IMR-90 (cell line): ENCODE measurements at regions of chr2 and their contacts with region 1.

Region 1: GRCh38 chr2:233371641-233372040 is 17.3 kb downstream of the DGKD start:
- DNase-seq: no peak
- ATAC-seq: no peak
- H3K4me3 ChIP-seq: no peak overlapping the region
- H3K27ac ChIP-seq: no peak overlapping the region
- H3K4me1 ChIP-seq: no peaks in the 10 kb centered on the region; the same call in 1 of the 2 replicates
- H3K27me3 ChIP-seq: no peaks in the 10 kb centered on the region
- CTCF ChIP-seq: no peak
- POLR2A ChIP-seq: no peak
- RAD21 ChIP-seq: no peak

Region 2: DNA sequence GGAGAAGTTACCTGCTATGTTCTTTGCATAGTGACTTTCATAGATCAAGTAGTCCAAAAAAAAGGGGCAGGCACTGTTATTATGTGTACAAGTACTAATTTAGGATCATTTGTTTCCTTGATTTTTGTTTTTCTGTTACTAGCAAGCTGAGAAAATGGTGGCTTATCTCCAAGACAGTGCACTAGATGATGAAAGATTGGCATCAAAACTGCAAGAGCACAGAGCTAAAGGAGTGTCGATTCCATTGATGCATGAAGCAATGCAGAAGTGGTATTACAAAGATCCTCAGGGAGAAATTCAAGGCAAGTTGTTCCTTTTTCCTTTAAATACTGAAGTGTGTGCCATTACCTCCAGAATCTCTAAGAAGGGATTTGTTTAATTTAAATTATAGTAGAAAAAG is 575.7 kb before region 1 on chr2:
- CTCF ChIA-PET with region 1: no interaction called
- POLR2A ChIA-PET with region 1: no interaction called
- dilution Hi-C with region 1: no loop called
- in situ Hi-C with region 1: no loop called
- intact Hi-C with region 1: no loop called
- DNase-seq: peak; percentile 15
- ATAC-seq: no peak
- H3K4me3 ChIP-seq: no peak overlapping the region
- H3K27ac ChIP-seq: no peak overlapping the region
- H3K4me1 ChIP-seq: no peaks in the 10 kb centered on the region
- H3K27me3 ChIP-seq: no peaks in the 10 kb centered on the region
- CTCF ChIP-seq: no peak
- POLR2A ChIP-seq: no peak
- RAD21 ChIP-seq: no peak

Region 3: DNA sequence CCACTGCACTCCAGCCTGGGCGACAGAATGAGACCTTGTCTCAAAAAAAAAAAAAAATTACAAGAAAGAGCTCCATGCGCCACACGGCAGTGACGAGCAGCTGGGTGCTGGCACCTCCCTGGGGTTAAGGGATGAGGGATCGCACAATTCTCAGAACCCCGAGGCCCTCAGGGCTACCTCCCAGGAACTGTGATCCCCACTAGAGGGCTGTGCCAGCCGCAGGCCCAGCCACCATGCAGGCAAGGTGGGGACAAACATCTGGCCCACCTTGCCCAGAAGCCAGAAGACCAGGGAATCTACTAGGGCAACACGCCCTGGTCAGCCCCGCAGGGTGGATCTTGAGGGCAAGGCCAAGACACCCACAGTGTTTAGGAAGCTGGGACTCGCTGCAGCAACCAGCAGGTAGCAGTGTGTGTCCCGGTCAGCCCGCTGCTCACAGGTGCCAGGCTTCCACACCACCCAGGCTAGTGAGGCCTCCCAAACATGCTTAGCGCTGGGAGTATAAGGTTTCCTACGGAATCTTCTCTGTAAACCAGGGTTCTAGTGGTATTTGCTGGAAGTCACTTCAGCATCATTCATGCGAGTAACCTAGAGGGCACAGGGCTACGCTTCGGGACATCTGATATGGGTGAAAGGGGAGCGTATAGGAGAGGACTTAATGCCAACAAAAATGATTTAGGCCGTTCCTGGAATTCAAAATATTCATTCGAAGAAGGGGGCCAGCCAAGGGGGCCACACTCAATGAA is 57.3 kb before region 1 on chr2:
- CTCF ChIA-PET with region 1: no interaction called
- POLR2A ChIA-PET with region 1: no interaction called
- dilution Hi-C with region 1: no loop called
- in situ Hi-C with region 1: no loop called
- intact Hi-C with region 1: no loop called
- DNase-seq: no peak
- ATAC-seq: no peak
- H3K4me3 ChIP-seq: no peak overlapping the region
- H3K27ac ChIP-seq: no peak overlapping the region
- H3K4me1 ChIP-seq: no peaks in the 10 kb centered on the region
- H3K27me3 ChIP-seq: peaks cover 19% of the 10 kb centered on the region
- CTCF ChIP-seq: no peak
- POLR2A ChIP-seq: no peak
- RAD21 ChIP-seq: no peak

Region 4: GRCh38 chr2:234864518-234864917 is 1492.9 kb after region 1 on chr2:
- CTCF ChIA-PET with region 1: no interaction called
- POLR2A ChIA-PET with region 1: interaction called, 13 read pairs
- dilution Hi-C with region 1: no loop called
- in situ Hi-C with region 1: no loop called
- intact Hi-C with region 1: no loop called
- DNase-seq: no peak
- ATAC-seq: no peak
- H3K4me3 ChIP-seq: no peak overlapping the region
- H3K27ac ChIP-seq: no peak overlapping the region
- H3K4me1 ChIP-seq: peaks cover 12% of the 10 kb centered on the region
- H3K27me3 ChIP-seq: no peaks in the 10 kb centered on the region
- CTCF ChIP-seq: no peak
- POLR2A ChIP-seq: no peak
- RAD21 ChIP-seq: no peak